ENCODE measurements at regions of chr2 and their contacts with region 1.

Region 1: GRCh38 chr2:229586746-229587705 is 127.3 kb downstream of the DNER start:
- DNase-seq: peak; percentile 48 to 82
- H3K4me3 ChIP-seq: no peak overlapping the region
- H3K4me1 ChIP-seq: no peaks in the 10 kb centered on the region
- H3K27me3 ChIP-seq: peaks cover 6% of the 10 kb centered on the region

Region 2: DNA sequence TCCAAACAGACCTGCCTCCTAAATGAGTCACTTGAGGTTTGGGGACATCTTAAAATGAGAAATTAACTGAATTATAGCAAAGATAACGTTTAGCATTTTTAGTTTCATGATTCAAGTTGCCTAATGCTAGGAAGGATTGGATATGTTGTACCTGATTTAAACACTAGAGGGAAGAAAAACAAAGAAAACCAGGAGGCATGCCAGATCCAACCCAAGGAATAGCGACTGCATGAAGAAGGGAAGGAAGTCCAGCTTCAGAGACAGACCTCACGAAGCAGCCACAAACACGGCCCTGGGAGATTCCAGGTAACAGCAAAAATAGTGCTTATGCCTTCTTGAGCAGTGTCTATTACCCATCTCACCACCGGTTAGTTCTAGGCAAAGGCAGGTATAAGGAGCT is 905.6 kb before region 1 on chr2:
- in situ Hi-C with region 1: loop called (anchors 25 kb)
- DNase-seq: peak in 1 of 2 experiments; percentile 7
- H3K4me3 ChIP-seq: no peak overlapping the region
- H3K4me1 ChIP-seq: no peaks in the 10 kb centered on the region
- H3K27me3 ChIP-seq: no peaks in the 10 kb centered on the region

Measured in HAP-1 (cell line).